CD8-positive, alpha-beta T cell (primary cell): ENCODE measurements at regions of chr13 and their contacts with region 1.

Region 1: GRCh38 chr13:61002686-61003085 is 413.0 kb downstream of the PCDH20 start:
- DNase-seq: no peak
- ATAC-seq: no peak
- H3K4me3 ChIP-seq: no peak overlapping the region
- H3K4me3 Mint-ChIP-seq: no peak overlapping the region
- H3K27ac ChIP-seq: no peak overlapping the region
- H3K27ac Mint-ChIP-seq: no peak overlapping the region
- H3K4me1 ChIP-seq: no peaks in the 10 kb centered on the region
- H3K4me1 Mint-ChIP-seq: no peaks in the 10 kb centered on the region
- H3K27me3 ChIP-seq: no peaks in the 10 kb centered on the region
- H3K27me3 Mint-ChIP-seq: no peaks in the 10 kb centered on the region
- CTCF ChIP-seq: no peak

Region 2: GRCh38 chr13:60603049-60603448 is 399.6 kb before region 1 on chr13:
- CTCF ChIA-PET with region 1: no interaction called
- POLR2A ChIA-PET with region 1: no interaction called
- intact Hi-C with region 1: no loop called
- DNase-seq: no peak
- ATAC-seq: no peak
- H3K4me3 ChIP-seq: no peak overlapping the region
- H3K4me3 Mint-ChIP-seq: no peak overlapping the region
- H3K27ac ChIP-seq: no peak overlapping the region
- H3K27ac Mint-ChIP-seq: no peak overlapping the region
- H3K4me1 ChIP-seq: no peaks in the 10 kb centered on the region
- H3K4me1 Mint-ChIP-seq: no peaks in the 10 kb centered on the region
- H3K27me3 ChIP-seq: no peaks in the 10 kb centered on the region
- H3K27me3 Mint-ChIP-seq: peaks cover under 1% of the 10 kb centered on the region
- CTCF ChIP-seq: no peak

Region 3: DNA sequence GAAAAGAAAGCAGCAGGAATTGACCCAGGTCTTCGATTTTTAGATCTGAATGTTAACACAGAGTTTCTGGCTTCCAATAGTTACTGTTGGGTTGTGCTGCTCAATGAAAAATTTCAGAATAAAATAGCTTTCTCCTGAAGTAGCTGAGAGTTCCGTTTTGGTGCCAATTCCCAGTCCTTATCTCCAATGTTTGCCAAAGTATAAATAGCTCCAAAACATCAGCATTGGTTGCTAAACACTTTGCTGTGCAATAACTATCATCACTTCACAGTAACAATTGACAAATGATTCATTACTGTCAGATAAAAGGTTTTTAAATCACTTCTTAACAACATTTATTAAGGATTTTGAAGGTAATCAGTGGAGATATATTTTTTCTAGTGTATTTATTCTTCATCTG is 33.0 kb before region 1 on chr13:
- CTCF ChIA-PET with region 1: no interaction called
- POLR2A ChIA-PET with region 1: no interaction called
- intact Hi-C with region 1: loop called in 1 of 2 experiments (anchors 2 kb)
- DNase-seq: no peak
- ATAC-seq: no peak
- H3K4me3 ChIP-seq: no peak overlapping the region
- H3K4me3 Mint-ChIP-seq: no peak overlapping the region
- H3K27ac ChIP-seq: no peak overlapping the region
- H3K27ac Mint-ChIP-seq: no peak overlapping the region
- H3K4me1 ChIP-seq: no peaks in the 10 kb centered on the region
- H3K4me1 Mint-ChIP-seq: no peaks in the 10 kb centered on the region
- H3K27me3 ChIP-seq: no peaks in the 10 kb centered on the region
- H3K27me3 Mint-ChIP-seq: no peaks in the 10 kb centered on the region
- CTCF ChIP-seq: no peak